Stomach (tissue), 19 donors: ENCODE measurements at regions of chr15 and their contacts with region 1.

Region 1: DNA sequence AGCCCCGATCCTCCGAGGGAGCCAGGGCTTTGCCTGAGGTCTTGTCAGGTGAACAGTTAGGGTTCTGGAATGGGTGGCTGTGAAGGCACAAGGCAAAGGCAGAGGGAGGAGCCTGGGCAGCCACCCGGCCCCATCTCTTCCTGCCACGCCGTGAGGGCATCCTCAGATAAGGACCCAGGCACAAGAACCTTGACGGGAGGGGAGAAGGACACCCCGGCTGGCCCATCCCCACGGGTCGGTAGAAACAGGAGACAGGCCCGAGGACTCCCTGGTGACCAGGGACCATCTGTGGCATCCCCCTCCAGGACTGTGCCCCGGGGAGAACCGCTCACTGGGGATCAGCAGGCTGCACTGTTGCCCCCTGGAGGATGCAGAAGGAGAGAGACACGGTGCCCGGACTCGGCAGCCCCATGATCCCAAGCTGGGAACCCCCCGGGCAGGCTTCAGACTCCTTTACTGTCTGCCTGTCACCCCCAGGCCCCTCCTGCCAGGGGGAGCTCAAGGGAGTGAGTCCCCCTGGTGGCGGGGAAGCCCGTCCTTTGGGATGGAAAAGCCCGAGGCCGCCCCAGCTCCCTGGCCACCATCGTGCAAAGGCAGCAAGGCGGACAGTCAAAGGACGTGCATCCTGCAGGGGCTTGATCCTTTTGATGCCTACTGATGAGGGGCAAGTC is 12.3 kb upstream of the PCSK6 start:
- DNase-seq: peak; percentile 48 to 71
- H3K4me3 ChIP-seq: no peak overlapping the region
- H3K27ac ChIP-seq: peak overlapping the region in 1 of 5 donors; percentile 61
- H3K4me1 ChIP-seq: peaks cover 21 to 34% (median 28%) of the 10 kb centered on the region in 4 donors
- H3K27me3 ChIP-seq: peaks cover 0 to 38% (median 3%) of the 10 kb centered on the region in 3 donors
- CTCF ChIP-seq: peak in 4 of 7 experiments; percentile 51 to 58 (median 53)
- EP300 ChIP-seq: no peak
- POLR2A ChIP-seq: no peak

Region 2: GRCh38 chr15:101307048-101307896 is 194.6 kb before region 1 on chr15:
- intact Hi-C with region 1: loop called (anchors 10 kb)
- DNase-seq: no peak
- H3K4me3 ChIP-seq: no peak overlapping the region
- H3K27ac ChIP-seq: no peak overlapping the region
- H3K4me1 ChIP-seq: no peaks in the 10 kb centered on the region
- H3K27me3 ChIP-seq: peaks cover 0 to 14% (median 0%) of the 10 kb centered on the region in 3 donors
- CTCF ChIP-seq: no peak
- EP300 ChIP-seq: no peak
- POLR2A ChIP-seq: no peak